Transverse colon (tissue), 4 donors: ENCODE measurements at regions of chr5 and their contacts with region 1.

Region 1: GRCh38 chr5:58849921-58850667 is 267.2 kb downstream of the RAB3C start:
- DNase-seq: peak; percentile 20
- H3K4me3 ChIP-seq: no peak overlapping the region
- H3K27ac ChIP-seq: no peak overlapping the region
- H3K4me1 ChIP-seq: peaks cover 0 to 3% (median 1%) of the 10 kb centered on the region in 4 donors
- H3K27me3 ChIP-seq: no peaks in the 10 kb centered on the region
- CTCF ChIP-seq: peak in 3 of 5 experiments; percentile 21 to 28 (median 28)
- EP300 ChIP-seq: no peak
- POLR2A ChIP-seq: no peak

Region 2: GRCh38 chr5:58498340-58498942 is 351.7 kb before region 1 on chr5:
- in situ Hi-C with region 1: loop called (anchors 25 kb)
- intact Hi-C with region 1: no loop called
- DNase-seq: peak; percentile 29
- H3K4me3 ChIP-seq: no peak overlapping the region
- H3K27ac ChIP-seq: no peak overlapping the region
- H3K4me1 ChIP-seq: no peaks in the 10 kb centered on the region
- H3K27me3 ChIP-seq: no peaks in the 10 kb centered on the region
- CTCF ChIP-seq: peak; percentile 55 to 75 (median 68)
- EP300 ChIP-seq: no peak
- POLR2A ChIP-seq: no peak

Region 3: GRCh38 chr5:58505971-58506640 is 344.0 kb before region 1 on chr5:
- in situ Hi-C with region 1: loop called in 1 of 4 experiments (anchors 25 kb)
- intact Hi-C with region 1: no loop called
- DNase-seq: no peak
- H3K4me3 ChIP-seq: no peak overlapping the region
- H3K27ac ChIP-seq: no peak overlapping the region
- H3K4me1 ChIP-seq: peaks cover 0 to 2% (median 0%) of the 10 kb centered on the region in 4 donors
- H3K27me3 ChIP-seq: no peaks in the 10 kb centered on the region
- CTCF ChIP-seq: no peak
- EP300 ChIP-seq: no peak
- POLR2A ChIP-seq: no peak

Region 4: DNA sequence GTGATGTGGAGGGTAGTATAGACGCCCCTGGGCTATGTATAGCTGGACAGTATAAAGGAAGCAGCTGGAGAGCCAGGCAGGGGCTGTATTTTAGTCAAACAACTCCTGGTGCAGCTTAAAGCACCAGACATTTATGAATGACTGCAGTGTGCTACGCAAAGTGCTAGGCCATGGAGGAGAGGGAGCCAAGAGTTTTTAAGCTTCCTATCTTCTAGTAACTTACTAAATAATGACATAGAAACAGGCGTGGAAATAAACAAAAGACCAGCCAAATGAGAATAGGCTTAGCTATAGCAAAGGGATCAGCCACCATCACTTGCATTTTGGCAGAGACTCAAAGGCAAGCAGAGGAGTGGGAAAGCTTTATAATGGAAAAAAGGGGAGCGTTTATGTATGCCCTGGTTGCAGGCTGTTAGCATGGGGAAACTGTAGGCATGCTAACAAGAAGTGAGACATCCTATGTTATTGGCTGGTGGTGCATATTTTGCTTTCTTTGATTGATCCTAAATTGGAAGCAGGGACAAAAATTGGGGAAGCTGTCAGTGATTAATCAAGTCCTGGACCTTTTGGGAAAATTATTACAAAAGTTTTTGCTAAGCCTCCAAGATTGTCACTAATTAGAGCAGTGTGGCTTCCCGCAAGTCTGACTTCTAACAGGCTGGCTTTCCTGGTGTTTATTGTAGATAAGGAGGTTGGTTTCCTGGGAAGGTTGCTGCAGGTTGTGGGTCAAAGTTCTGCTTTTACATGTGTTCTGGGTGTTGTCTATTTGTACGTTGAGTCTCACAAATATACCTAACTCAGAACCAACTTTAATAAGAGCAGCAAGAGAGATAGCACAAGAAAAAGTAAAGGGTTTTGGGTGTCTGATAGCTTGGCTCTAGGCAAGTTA is 220.6 kb before region 1 on chr5:
- in situ Hi-C with region 1: no loop called
- intact Hi-C with region 1: no loop called
- DNase-seq: peak; percentile 44
- H3K4me3 ChIP-seq: no peak overlapping the region
- H3K27ac ChIP-seq: peak overlapping the region; percentile 67 to 75 (median 74)
- H3K4me1 ChIP-seq: peaks cover 0 to 21% (median 6%) of the 10 kb centered on the region in 4 donors
- H3K27me3 ChIP-seq: no peaks in the 10 kb centered on the region
- CTCF ChIP-seq: no peak
- EP300 ChIP-seq: no peak
- POLR2A ChIP-seq: no peak